HepG2 (cell line): ENCODE measurements at regions of chr21 and their contacts with region 1.

Region 1: DNA sequence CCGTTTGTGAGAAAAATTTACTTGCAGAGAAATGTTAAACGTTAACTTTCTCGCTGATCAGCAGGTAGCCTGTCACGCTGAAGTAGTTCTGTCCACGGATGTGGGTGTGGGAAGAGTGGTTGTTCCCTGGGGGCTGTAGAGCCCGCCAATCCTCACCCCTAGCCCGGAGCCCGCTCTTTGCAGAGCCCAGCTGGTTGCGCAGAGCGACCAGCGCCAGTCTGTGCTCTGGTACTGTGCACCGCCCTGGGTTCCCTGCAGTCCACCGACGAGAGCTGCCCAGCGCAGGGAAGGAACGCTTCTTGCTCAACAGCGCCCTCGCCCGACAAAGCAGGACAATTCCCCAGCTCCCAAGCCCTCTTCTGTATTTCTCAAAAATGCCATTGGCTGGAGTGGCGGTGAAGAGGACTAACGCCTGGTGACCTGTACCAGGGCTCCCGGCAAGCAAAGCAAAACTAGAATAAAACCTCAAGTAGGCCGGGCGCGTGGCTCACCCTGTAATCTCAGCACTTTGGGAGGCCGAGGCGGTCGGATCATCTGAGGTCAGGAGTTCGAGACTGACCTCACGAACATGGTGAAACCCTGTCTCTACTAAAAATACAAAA is 3.3 kb downstream of the RIPPLY3 start:
- DNase-seq: peak; percentile 83
- ATAC-seq: peak; percentile 96
- H3K4me3 ChIP-seq: peak overlapping the region; percentile 56 to 74 (median 57)
- H3K27ac ChIP-seq: no peak overlapping the region
- H3K4me1 ChIP-seq: peaks cover 22% of the 10 kb centered on the region
- H3K27me3 ChIP-seq: peaks cover 0 to 4% of the 10 kb centered on the region in 2 experiments; a peak in 1 of 5 replicates
- CTCF ChIP-seq: peak; percentile 97
- EP300 ChIP-seq: no peak
- POLR2A ChIP-seq: 0 out of 4 replicates have a peak, but pooled peaks of 1 of the 2 experiments have one; percentile 23
- RAD21 ChIP-seq: peak; percentile 89

Region 2: DNA sequence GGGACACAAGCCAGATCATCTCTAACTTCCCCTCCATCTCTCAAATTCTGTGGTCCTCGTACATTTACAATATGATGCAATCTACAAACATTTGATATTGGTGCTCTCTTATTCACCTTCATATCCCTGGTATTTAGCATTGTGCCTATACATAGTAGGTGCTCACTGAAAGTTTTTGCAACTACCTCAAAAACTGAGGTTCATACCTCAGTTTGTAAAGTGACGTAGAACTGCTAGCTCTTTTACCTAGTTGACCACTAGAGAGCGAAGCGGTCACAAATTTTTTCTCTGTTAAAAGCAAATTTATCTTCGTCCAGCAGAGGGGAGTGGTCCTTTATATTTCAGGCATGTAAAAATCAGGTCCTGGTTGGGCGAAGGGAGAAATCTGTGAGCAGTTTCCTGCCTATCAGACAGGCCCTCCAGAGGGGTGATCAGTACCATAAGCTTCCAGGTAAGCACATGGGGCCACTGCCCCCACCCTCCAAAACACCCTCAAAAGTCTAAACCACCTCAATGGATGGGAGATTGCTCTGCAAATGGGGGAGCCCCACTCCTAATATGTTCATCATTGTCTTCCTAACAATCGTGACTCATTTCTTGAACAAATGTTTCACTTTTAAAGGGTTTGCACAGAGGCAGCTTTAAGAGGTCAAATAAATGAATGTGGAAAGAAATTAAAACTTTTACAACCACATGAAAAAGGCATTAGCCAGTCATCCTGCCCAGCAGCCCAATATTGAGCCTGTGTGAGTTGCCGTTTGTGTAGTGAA is 32.8 kb before region 1 on chr21:
- CTCF ChIA-PET with region 1: interaction called, 46 read pairs
- POLR2A ChIA-PET with region 1: interaction called, 14 read pairs
- in situ Hi-C with region 1: no loop called
- intact Hi-C with region 1: loop called (anchors 1 kb)
- DNase-seq: peak; percentile 87
- ATAC-seq: peak; percentile 89
- H3K4me3 ChIP-seq: peak overlapping the region in 1 of 3 experiments; percentile 7; a peak in 1 of 6 replicates
- H3K27ac ChIP-seq: peak overlapping the region; percentile 18
- H3K4me1 ChIP-seq: peaks cover 22% of the 10 kb centered on the region
- H3K27me3 ChIP-seq: no peaks in the 10 kb centered on the region
- CTCF ChIP-seq: peak; percentile 87
- EP300 ChIP-seq: no peak; a peak in 1 of 4 replicates
- POLR2A ChIP-seq: no peak
- RAD21 ChIP-seq: peak; percentile 77

Region 3: DNA sequence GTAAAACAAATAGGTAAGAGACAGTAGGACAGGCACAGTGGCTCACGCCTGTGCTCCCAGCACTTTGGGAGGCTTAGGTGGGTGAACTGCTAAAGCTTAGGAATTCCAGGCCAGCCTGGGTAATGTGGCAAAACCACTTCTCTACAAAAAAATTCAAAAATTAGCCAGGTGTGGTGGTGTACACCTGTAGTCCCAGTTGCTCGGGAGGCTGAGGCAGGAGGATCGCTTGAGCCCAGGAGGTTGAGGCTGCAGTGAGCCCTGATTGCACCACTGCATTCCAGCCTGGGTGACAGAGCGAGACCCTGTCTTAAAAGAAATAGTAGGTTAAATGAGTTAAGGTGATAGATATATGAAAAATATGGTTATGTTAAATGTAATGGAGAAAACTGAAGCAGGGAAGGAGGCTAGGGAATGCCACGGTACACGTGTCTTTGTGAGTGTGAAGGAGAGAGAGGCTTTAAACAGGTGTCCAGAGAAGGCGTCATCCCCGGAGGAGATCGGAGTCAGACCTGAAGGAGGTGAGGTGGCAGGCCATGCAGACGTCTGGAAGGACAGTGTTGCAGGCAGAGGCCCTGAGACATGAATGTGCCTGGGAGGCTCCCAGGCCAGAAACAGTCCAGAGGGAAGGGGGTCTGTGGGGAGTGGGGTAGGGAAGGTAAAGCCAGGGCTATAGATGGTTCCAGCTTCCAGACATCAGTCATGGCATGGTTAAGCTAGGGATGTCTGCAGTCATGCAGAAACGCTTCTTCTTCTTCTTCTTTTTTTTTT is 10.5 kb before region 1 on chr21:
- CTCF ChIA-PET with region 1: no interaction called
- POLR2A ChIA-PET with region 1: no interaction called
- in situ Hi-C with region 1: no loop called
- intact Hi-C with region 1: no loop called
- DNase-seq: no peak
- ATAC-seq: no peak
- H3K4me3 ChIP-seq: no peak overlapping the region
- H3K27ac ChIP-seq: no peak overlapping the region
- H3K4me1 ChIP-seq: peaks cover 23% of the 10 kb centered on the region
- H3K27me3 ChIP-seq: peaks cover 0 to 5% of the 10 kb centered on the region in 2 experiments; a peak in 2 of 5 replicates
- CTCF ChIP-seq: no peak
- EP300 ChIP-seq: no peak
- POLR2A ChIP-seq: no peak
- RAD21 ChIP-seq: no peak